Sigmoid colon (tissue), 7 donors: ENCODE measurements at regions of chr19 and their contacts with region 1.

Region 1: DNA sequence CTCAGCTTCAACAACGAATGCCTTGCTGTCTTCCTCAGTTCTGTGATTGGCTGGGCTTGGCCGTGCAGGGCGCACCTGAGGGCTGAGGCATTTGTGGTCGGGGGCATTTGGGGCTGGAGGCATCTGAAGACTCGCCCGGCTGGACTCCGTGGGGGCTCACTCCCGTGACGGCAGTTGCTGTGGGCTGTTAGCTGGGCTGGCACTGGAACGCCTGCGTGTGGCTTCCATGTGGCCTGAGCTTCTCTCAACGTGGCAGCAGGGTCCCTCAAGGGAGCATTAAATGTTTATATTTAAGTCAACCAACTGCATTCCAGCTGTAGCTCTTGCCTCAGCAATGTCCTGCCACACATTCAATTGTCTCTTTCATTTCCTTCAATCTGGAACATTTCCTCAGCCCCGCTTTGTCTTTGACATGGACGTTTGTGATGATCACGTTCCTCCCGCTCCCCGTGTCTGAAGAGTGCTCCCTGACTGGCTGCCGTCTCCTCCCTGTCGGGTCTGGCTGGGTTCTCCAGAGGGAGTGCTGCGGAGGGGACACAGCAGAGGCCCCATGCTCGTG is 21.0 kb downstream of the CCDC8 start:
- DNase-seq: peak; percentile 62
- H3K4me3 ChIP-seq: no peak overlapping the region
- H3K27ac ChIP-seq: peak overlapping the region in 1 of 4 donors; percentile 31
- H3K4me1 ChIP-seq: peaks cover 0 to 6% (median 0%) of the 10 kb centered on the region in 4 donors
- H3K27me3 ChIP-seq: no peaks in the 10 kb centered on the region
- CTCF ChIP-seq: no peak
- EP300 ChIP-seq: no peak
- POLR2A ChIP-seq: no peak

Region 2: GRCh38 chr19:46487802-46488445 is 95.6 kb after region 1 on chr19:
- intact Hi-C with region 1: loop called (anchors 1 kb)
- DNase-seq: peak; percentile 90
- H3K4me3 ChIP-seq: peak overlapping the region; percentile 15 to 39 (median 31)
- H3K27ac ChIP-seq: no peak overlapping the region
- H3K4me1 ChIP-seq: peaks cover 0 to 36% (median 33%) of the 10 kb centered on the region in 4 donors
- H3K27me3 ChIP-seq: peaks cover 0 to 63% (median 48%) of the 10 kb centered on the region in 3 donors
- CTCF ChIP-seq: peak; percentile 90 to 99 (median 92)
- EP300 ChIP-seq: no peak
- POLR2A ChIP-seq: no peak

Region 3: GRCh38 chr19:46596008-46596407 is 203.7 kb after region 1 on chr19:
- intact Hi-C with region 1: no loop called
- DNase-seq: no peak
- H3K4me3 ChIP-seq: no peak overlapping the region
- H3K27ac ChIP-seq: no peak overlapping the region
- H3K4me1 ChIP-seq: peaks cover 0 to 8% (median 3%) of the 10 kb centered on the region in 4 donors
- H3K27me3 ChIP-seq: no peaks in the 10 kb centered on the region
- CTCF ChIP-seq: no peak
- EP300 ChIP-seq: no peak
- POLR2A ChIP-seq: no peak